SK-N-SH (cell line): ENCODE measurements at regions of chr14 and their contacts with region 1.

Region 1: GRCh38 chr14:76102011-76102379 is 49.7 kb upstream of the GPATCH2L start:
- DNase-seq: no peak
- H3K4me3 ChIP-seq: no peak overlapping the region
- H3K27ac ChIP-seq: no peak overlapping the region
- H3K4me1 ChIP-seq: peaks cover 0 to 11% of the 10 kb centered on the region in 2 experiments; a peak in 1 of 4 replicates
- H3K27me3 ChIP-seq: no peaks in the 10 kb centered on the region; the same call in 1 of the 2 replicates
- CTCF ChIP-seq: no peak
- EP300 ChIP-seq: no peak
- RAD21 ChIP-seq: peak; percentile 48; the same call in 1 of the 2 replicates

Region 2: GRCh38 chr14:76034566-76034965 is 67.4 kb before region 1 on chr14:
- CTCF ChIA-PET with region 1: no interaction called
- POLR2A ChIA-PET with region 1: no interaction called
- DNase-seq: no peak
- H3K4me3 ChIP-seq: no peak overlapping the region
- H3K27ac ChIP-seq: no peak overlapping the region
- H3K4me1 ChIP-seq: no peaks in the 10 kb centered on the region
- H3K27me3 ChIP-seq: no peaks in the 10 kb centered on the region
- CTCF ChIP-seq: no peak
- EP300 ChIP-seq: no peak
- RAD21 ChIP-seq: no peak

Region 3: GRCh38 chr14:76090616-76091391 is 11.2 kb before region 1 on chr14:
- CTCF ChIA-PET with region 1: interaction called, 11 read pairs
- POLR2A ChIA-PET with region 1: no interaction called
- DNase-seq: no peak
- H3K4me3 ChIP-seq: no peak overlapping the region
- H3K27ac ChIP-seq: no peak overlapping the region
- H3K4me1 ChIP-seq: peaks cover 0 to 11% of the 10 kb centered on the region in 2 experiments; a peak in 1 of 4 replicates
- H3K27me3 ChIP-seq: no peaks in the 10 kb centered on the region
- CTCF ChIP-seq: no peak
- EP300 ChIP-seq: no peak
- RAD21 ChIP-seq: no peak